ENCODE measurements at regions of chr16 and their contacts with region 1.

Region 1: DNA sequence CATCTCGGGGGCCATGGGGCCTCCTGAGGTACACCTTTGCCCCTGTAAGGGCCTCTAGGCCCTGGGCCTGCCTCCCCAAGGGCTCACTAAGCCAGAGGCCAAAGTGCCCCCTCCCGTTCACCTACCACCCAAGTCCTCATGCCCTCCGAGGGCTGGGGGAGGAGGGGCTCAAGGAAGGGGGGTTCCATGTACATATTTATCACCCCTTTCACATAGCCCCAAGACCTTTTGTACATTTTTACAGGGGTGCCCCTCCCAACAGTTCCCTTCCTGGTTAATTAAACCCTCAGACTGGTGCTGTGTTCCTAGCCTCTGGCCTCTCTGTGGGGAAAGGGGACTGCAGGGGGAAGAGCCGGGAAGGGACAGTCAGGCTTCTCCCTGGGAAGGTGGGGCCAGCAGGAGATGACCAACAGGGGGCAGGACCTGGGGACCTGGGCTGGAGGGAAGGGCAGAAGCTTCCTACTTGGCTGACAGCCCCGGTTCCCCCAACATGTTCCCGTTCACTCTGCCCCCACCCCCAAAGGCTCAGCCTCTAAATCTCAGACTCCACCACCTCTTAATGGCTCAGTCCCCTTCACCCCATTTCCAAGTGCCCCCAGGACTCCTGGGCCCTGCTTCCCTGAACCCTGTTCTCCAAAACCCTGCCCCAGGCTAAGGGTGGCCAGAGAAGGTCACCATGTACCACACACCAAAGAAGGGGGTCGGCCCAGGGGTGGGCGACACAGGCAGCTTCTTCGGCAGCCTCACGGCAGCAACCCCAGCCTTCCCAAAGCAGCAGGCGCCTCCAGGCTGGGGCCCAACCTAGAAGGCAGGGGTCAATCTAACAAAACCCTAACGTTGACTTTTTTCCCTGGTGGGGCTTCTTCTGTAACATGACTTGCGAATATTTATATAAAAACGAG is 11.9 kb downstream of the FBRS start:
- DNase-seq: no peak
- ATAC-seq: peak in 2 of 4 donors; percentile 6 to 19
- H3K4me3 ChIP-seq: no peak overlapping the region
- H3K27ac ChIP-seq: no peak overlapping the region
- H3K4me1 ChIP-seq: peaks cover 8% of the 10 kb centered on the region
- H3K27me3 ChIP-seq: no peaks in the 10 kb centered on the region
- CTCF ChIP-seq: no peak

Region 2: GRCh38 chr16:30691907-30692306 is 21.8 kb after region 1 on chr16:
- intact Hi-C with region 1: loop called in 1 of 2 experiments (anchors 2 kb)
- DNase-seq: no peak
- ATAC-seq: no peak
- H3K4me3 ChIP-seq: no peak overlapping the region
- H3K27ac ChIP-seq: no peak overlapping the region
- H3K4me1 ChIP-seq: no peaks in the 10 kb centered on the region
- H3K27me3 ChIP-seq: no peaks in the 10 kb centered on the region
- CTCF ChIP-seq: no peak

Measured in psoas muscle (tissue), 8 donors.